Activated CD4-positive, alpha-beta T cell treated with anti-CD3 and anti-CD28 coated beads, Interleukin-2, amount 10 ng/mL, durations not matched to agents 24 days and 14 days (primary cell): ENCODE measurements at regions of chr6 and their contacts with region 1.

Region 1: DNA sequence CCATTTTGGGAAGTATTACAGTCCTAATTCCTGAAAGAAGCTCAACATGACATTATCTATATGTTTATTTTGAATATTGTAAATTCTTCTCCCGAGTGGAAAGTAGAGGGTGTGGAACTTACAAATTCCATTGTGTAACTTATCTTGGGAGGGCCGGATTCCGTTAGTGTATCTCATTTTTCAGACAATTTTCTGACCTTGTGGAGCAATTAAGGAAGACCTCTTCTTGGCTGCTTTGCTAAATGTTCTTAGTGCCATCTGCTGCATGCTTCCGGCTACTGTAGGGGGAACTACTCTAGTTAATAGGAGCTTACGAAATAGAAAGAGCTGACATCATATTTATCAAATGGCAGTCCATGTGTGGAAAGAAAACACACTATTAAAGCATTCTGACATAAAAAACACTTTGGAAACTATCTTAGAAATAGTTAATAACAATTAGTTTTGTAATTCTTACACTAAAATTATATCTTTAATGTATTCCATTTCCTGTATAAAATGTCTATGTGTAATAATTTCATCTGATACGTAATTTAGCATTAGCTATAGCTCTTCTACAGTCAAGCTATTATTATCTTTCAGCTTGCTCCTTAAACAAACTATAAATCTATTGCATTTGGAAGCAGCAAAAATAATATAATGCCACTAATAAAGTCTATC is 41.5 kb upstream of the KCNQ5 start:
- DNase-seq: no peak
- H3K4me3 Mint-ChIP-seq: no peak overlapping the region
- H3K27ac Mint-ChIP-seq: no peak overlapping the region
- H3K4me1 Mint-ChIP-seq: peaks cover 2% of the 10 kb centered on the region
- H3K27me3 Mint-ChIP-seq: peaks cover 10% of the 10 kb centered on the region

Region 2: GRCh38 chr6:72411872-72412708 is 168.3 kb before region 1 on chr6:
- intact Hi-C with region 1: loop called (anchors 10 kb)
- DNase-seq: peak; percentile 94
- H3K4me3 Mint-ChIP-seq: no peak overlapping the region
- H3K27ac Mint-ChIP-seq: no peak overlapping the region
- H3K4me1 Mint-ChIP-seq: no peaks in the 10 kb centered on the region
- H3K27me3 Mint-ChIP-seq: peaks cover 4% of the 10 kb centered on the region

Region 3: GRCh38 chr6:72595812-72596211 is 15.4 kb after region 1 on chr6:
- intact Hi-C with region 1: no loop called
- DNase-seq: no peak
- H3K4me3 Mint-ChIP-seq: no peak overlapping the region
- H3K27ac Mint-ChIP-seq: no peak overlapping the region
- H3K4me1 Mint-ChIP-seq: peaks cover 1% of the 10 kb centered on the region
- H3K27me3 Mint-ChIP-seq: peaks cover 21% of the 10 kb centered on the region

Region 4: GRCh38 chr6:72724545-72724944 is 144.1 kb after region 1 on chr6:
- intact Hi-C with region 1: no loop called
- DNase-seq: no peak
- H3K4me3 Mint-ChIP-seq: no peak overlapping the region
- H3K27ac Mint-ChIP-seq: no peak overlapping the region
- H3K4me1 Mint-ChIP-seq: no peaks in the 10 kb centered on the region
- H3K27me3 Mint-ChIP-seq: no peaks in the 10 kb centered on the region